Caco-2 (cell line): ENCODE measurements at regions of chr12 and their contacts with region 1.

Region 1: DNA sequence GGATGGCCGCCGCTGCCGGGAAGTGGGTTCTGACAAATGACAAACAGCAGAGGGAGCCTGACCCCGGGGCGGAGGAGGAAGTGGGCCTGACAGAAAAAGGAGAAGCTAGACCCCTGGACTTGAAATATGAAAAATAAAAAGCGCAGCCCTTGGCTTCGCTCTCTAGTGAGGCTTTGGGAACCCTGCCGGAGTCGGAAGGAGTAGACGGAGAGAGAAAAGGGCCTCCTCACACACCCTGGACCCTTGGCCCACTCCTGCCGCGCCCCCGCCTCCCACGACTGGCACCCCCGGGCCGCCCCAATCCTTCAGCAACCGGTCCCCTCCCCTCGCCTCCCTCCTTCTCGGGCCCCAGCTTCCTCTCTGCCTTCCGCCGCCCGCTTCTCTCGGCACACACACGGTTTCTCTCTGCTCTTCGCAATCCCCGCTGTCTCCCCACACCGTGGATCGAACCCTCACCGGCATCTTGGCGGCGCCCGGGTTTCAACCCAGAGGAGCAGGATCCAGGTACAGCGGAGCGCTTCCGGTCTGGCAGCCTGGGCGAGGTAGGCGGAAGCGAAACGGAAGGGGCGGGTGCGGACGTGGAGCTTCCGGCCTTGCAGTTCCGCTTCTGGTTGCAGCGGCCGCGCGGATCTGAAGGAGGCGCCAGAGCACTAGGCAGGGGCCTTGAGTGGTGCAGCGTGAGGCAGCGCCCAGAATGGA is at the start of gene ARPC3:
- DNase-seq: peak; percentile 96
- H3K4me3 ChIP-seq: peak within 1 kb of the TSS; percentile 90
- H3K4me3 Mint-ChIP-seq: peak within 1 kb of the TSS; percentile 85
- H3K27ac Mint-ChIP-seq: peak within 1 kb of the TSS; percentile 98
- H3K4me1 ChIP-seq: peaks cover 5% of the 10 kb centered on the region
- H3K4me1 Mint-ChIP-seq: no peaks in the 10 kb centered on the region
- H3K27me3 ChIP-seq: no peaks in the 10 kb centered on the region
- H3K27me3 Mint-ChIP-seq: no peaks in the 10 kb centered on the region
- CTCF ChIP-seq: peak; percentile 79 to 89
- total RNA-seq, gene ARPC3: 302 and 309 TPM in 2 replicates

Region 2: DNA sequence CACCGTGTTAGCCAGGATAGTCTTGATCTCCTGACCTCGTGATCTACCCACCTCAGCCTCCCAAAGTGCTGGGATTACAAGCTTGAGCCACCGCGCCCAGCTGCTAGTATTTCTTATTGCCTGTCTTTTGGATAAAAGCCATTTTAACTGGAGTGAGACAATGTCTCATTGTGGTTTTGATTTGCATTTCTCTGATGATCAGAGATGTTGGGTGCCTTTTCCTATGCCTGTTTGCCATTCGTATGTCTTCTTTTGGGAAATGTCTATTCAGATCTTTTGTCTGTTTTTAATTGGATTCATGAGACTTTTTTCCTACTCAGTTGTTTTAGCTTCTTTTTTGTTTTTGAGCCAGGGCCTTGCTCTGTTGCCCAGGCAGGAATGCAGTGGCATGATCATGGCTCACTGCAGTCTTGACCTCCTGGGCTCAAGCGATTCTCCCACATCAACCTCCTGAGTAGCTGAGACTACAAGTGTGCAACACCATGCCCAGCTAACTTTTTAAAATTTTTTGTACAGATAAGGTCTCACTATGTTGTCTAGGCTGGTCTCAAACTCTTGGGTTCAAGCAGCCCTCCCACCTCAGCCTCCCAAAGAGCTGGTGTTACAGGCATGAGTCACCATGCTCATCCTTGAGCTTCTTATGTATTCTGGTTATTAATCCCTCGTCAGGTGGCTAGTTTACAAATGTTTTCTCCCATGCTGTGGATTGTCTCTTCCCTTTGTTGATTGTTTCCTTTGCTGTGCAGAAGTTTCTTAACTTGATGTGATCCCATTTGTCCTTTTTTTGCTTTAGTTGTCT is 1267.7 kb before region 1 on chr12:
- CTCF ChIA-PET with region 1: no interaction called
- POLR2A ChIA-PET with region 1: no interaction called
- intact Hi-C with region 1: no loop called
- DNase-seq: no peak
- H3K4me3 ChIP-seq: no peak overlapping the region
- H3K4me3 Mint-ChIP-seq: no peak overlapping the region
- H3K27ac Mint-ChIP-seq: no peak overlapping the region
- H3K4me1 ChIP-seq: no peaks in the 10 kb centered on the region
- H3K4me1 Mint-ChIP-seq: peaks cover 6% of the 10 kb centered on the region
- H3K27me3 ChIP-seq: no peaks in the 10 kb centered on the region
- H3K27me3 Mint-ChIP-seq: no peaks in the 10 kb centered on the region
- CTCF ChIP-seq: no peak

Region 3: GRCh38 chr12:110304061-110304551 is 145.8 kb before region 1 on chr12:
- CTCF ChIA-PET with region 1: no interaction called
- POLR2A ChIA-PET with region 1: no interaction called
- intact Hi-C with region 1: no loop called
- DNase-seq: no peak
- H3K4me3 ChIP-seq: no peak overlapping the region
- H3K4me3 Mint-ChIP-seq: no peak overlapping the region
- H3K27ac Mint-ChIP-seq: no peak overlapping the region
- H3K4me1 ChIP-seq: no peaks in the 10 kb centered on the region; the same call in 1 of the 2 replicates
- H3K4me1 Mint-ChIP-seq: peaks cover 11% of the 10 kb centered on the region
- H3K27me3 ChIP-seq: no peaks in the 10 kb centered on the region
- H3K27me3 Mint-ChIP-seq: no peaks in the 10 kb centered on the region
- CTCF ChIP-seq: no peak

Region 4: GRCh38 chr12:110355073-110355472 is 94.9 kb before region 1 on chr12:
- CTCF ChIA-PET with region 1: no interaction called
- POLR2A ChIA-PET with region 1: no interaction called
- intact Hi-C with region 1: no loop called
- DNase-seq: peak; percentile 46 to 56
- H3K4me3 ChIP-seq: no peak overlapping the region
- H3K4me3 Mint-ChIP-seq: no peak overlapping the region
- H3K27ac Mint-ChIP-seq: no peak overlapping the region
- H3K4me1 ChIP-seq: no peaks in the 10 kb centered on the region
- H3K4me1 Mint-ChIP-seq: no peaks in the 10 kb centered on the region
- H3K27me3 ChIP-seq: no peaks in the 10 kb centered on the region
- H3K27me3 Mint-ChIP-seq: no peaks in the 10 kb centered on the region
- CTCF ChIP-seq: peak in 1 of 2 experiments; percentile 62

Region 5: GRCh38 chr12:110468212-110469048 is 18.5 kb after region 1 on chr12 and contains the starts of genes FAM216A and GPN3:
- CTCF ChIA-PET with region 1: interaction called, 54 read pairs
- POLR2A ChIA-PET with region 1: interaction called, 32 read pairs
- intact Hi-C with region 1: loop called (anchors 1 kb)
- DNase-seq: peak; percentile 97 to 98
- H3K4me3 ChIP-seq: peak within 1 kb of the TSS; percentile 62
- H3K4me3 Mint-ChIP-seq: peak within 1 kb of the TSS; percentile 82
- H3K27ac Mint-ChIP-seq: peak within 1 kb of the TSS; percentile 94
- H3K4me1 ChIP-seq: no peaks in the 10 kb centered on the region
- H3K4me1 Mint-ChIP-seq: no peaks in the 10 kb centered on the region
- H3K27me3 ChIP-seq: no peaks in the 10 kb centered on the region
- H3K27me3 Mint-ChIP-seq: no peaks in the 10 kb centered on the region
- CTCF ChIP-seq: no peak
- total RNA-seq, gene FAM216A: 13.1 and 15.9 TPM in 2 replicates
- total RNA-seq, gene GPN3: 35.0 and 39.0 TPM in 2 replicates

Region 6: DNA sequence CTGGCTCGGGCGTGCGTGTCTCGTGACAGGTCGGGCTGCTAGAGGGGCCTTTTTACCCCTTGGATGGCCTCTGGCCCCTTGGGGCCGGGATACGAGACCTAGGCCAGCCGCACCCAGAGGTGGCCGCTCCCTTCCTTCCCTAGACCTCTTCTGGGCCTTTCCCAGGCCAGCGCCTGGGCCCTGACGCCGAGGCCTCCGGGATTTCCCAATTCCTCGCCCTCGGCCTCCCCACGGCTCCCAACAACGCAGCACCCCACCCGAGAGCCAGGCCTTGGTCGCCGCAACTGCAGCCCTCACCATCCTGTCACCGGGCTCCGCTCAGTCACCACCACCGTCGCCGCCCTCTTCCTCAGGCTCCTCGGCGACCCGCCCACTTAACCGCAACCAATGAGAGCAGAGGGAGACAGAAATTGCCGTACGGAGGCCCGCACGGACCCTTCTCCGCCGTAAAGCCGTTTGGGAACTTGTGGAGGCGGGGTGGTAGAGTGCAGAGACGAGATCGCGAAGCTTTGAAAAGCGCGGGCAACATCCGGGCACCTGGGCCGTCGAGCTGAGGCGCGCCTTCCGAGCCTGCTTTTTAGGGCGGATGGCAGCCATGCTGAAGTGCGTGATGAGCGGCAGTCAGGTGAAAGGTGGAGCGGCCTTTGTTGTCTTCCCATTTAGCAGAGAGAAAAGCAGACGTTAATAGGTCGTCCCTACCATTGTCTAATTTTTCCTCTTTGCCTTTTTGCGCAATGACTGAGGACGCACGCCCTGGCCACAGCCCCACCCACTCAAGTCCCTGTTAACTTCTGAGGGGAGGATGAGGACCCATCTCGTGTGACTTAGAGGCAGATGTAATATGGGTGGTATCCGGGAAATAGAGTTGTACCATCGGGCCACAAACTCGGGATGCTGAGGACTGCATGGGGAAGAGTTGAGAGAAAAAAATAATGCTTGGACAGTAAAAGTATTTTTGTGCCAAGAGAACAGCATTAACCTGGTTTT is 52.1 kb after region 1 on chr12 and contains the starts of genes RAD9B and VPS29:
- CTCF ChIA-PET with region 1: interaction called, 4 read pairs
- POLR2A ChIA-PET with region 1: interaction called, 13 read pairs
- intact Hi-C with region 1: loop called (anchors 5 kb)
- DNase-seq: peak; percentile 99
- H3K4me3 ChIP-seq: peak within 1 kb of the TSS; percentile 55
- H3K4me3 Mint-ChIP-seq: peak within 1 kb of the TSS; percentile 95
- H3K27ac Mint-ChIP-seq: peak within 1 kb of the TSS; percentile 97
- H3K4me1 ChIP-seq: peaks cover 21% of the 10 kb centered on the region
- H3K4me1 Mint-ChIP-seq: no peaks in the 10 kb centered on the region
- H3K27me3 ChIP-seq: no peaks in the 10 kb centered on the region
- H3K27me3 Mint-ChIP-seq: no peaks in the 10 kb centered on the region
- CTCF ChIP-seq: no peak
- total RNA-seq, gene RAD9B: 2.8 and 3.8 TPM in 2 replicates
- total RNA-seq, gene VPS29: 127 and 132 TPM in 2 replicates

Region 7: DNA sequence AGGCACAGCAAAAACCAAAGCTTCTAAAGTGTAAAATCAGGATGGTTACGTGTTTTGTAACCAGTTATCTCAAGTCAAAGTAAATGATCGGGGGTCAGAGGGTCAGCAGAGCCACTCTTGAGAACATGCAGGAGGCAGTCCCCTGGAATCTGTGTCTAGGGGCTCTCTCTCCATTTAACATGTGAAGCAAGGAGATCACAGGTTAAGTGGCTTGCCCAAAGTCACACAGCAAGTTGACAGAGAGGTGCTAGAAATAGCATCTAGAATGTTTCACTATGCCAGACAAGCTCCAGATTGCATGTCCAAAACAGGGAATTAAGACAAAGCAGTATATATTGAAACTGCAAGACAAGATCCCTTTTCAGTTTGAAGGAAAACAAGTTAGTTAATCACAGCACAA is 99.8 kb after region 1 on chr12:
- CTCF ChIA-PET with region 1: no interaction called
- POLR2A ChIA-PET with region 1: interaction called, 11 read pairs
- intact Hi-C with region 1: no loop called
- DNase-seq: no peak
- H3K4me3 ChIP-seq: no peak overlapping the region
- H3K4me3 Mint-ChIP-seq: no peak overlapping the region
- H3K27ac Mint-ChIP-seq: no peak overlapping the region
- H3K4me1 ChIP-seq: no peaks in the 10 kb centered on the region
- H3K4me1 Mint-ChIP-seq: no peaks in the 10 kb centered on the region
- H3K27me3 ChIP-seq: no peaks in the 10 kb centered on the region
- H3K27me3 Mint-ChIP-seq: no peaks in the 10 kb centered on the region
- CTCF ChIP-seq: no peak

Region 8: GRCh38 chr12:110888256-110888991 is 438.5 kb after region 1 on chr12:
- CTCF ChIA-PET with region 1: no interaction called
- POLR2A ChIA-PET with region 1: no interaction called
- intact Hi-C with region 1: loop called (anchors 5 kb)
- DNase-seq: no peak
- H3K4me3 ChIP-seq: no peak overlapping the region
- H3K4me3 Mint-ChIP-seq: peak overlapping the region; percentile 77
- H3K27ac Mint-ChIP-seq: peak overlapping the region; percentile 64
- H3K4me1 ChIP-seq: no peaks in the 10 kb centered on the region
- H3K4me1 Mint-ChIP-seq: no peaks in the 10 kb centered on the region
- H3K27me3 ChIP-seq: no peaks in the 10 kb centered on the region
- H3K27me3 Mint-ChIP-seq: peaks cover 10% of the 10 kb centered on the region
- CTCF ChIP-seq: no peak